ENCODE measurements at regions of chr11 and their contacts with region 1.

Region 1: DNA sequence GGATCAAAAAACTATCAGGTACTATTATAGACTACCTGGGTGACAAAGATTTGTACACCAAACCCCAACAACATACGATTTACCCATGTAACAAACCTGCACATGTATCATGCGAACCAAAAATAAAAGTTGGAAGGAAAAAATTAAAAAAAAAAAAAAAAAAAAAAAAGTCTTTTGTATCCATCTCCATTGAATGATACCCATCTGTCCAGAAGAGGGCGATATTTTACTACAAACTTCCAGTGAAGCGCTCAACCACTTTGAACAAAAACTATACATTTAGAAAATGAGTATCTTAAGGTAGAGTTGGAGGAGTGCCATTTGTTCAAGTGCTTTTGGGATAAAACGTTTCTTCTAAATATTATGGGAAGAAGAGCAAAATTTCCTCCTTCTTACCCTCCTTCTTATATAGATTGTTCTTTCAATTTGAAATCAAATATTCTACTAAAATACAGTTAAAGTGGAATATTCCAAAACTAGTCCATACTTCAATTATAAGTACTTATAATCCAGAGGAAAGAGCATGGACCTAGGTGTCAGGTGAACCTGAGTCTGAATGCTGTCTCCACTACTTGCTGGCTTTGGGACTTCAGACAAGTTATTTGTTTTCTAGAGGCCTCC is 23.3 kb downstream of the ARL14EP start:
- DNase-seq: no peak
- H3K4me3 ChIP-seq: no peak overlapping the region
- H3K27ac ChIP-seq: no peak overlapping the region
- H3K4me1 ChIP-seq: no peaks in the 10 kb centered on the region
- H3K27me3 ChIP-seq: no peaks in the 10 kb centered on the region
- CTCF ChIP-seq: peak; percentile 43 to 67 (median 64)

Region 2: GRCh38 chr11:28346209-28346608 is 2000.0 kb before region 1 on chr11:
- intact Hi-C with region 1: no loop called
- DNase-seq: no peak
- H3K4me3 ChIP-seq: no peak overlapping the region
- H3K27ac ChIP-seq: no peak overlapping the region
- H3K4me1 ChIP-seq: no peaks in the 10 kb centered on the region
- H3K27me3 ChIP-seq: no peaks in the 10 kb centered on the region
- CTCF ChIP-seq: no peak

Region 3: DNA sequence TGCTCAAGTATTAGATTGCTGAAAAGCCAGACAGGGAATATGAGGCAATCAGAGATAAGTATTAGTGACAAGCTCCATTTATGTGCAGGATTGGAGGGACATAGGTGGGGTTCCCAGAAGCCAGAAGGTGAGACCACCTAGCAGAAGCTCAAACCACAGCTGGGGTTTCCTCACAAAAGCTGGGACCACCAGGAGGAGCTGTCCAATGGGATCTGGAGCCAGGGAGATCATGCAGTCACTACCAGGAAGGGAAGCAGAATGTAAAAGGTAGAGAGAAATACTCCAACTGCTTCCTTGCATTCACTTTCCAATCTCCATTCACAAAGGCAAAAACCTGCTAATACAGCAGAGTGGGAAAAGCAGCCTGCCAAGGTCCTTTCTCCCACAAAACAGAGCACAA is 120.5 kb before region 1 on chr11:
- intact Hi-C with region 1: no loop called
- DNase-seq: no peak
- H3K4me3 ChIP-seq: no peak overlapping the region
- H3K27ac ChIP-seq: no peak overlapping the region
- H3K4me1 ChIP-seq: no peaks in the 10 kb centered on the region
- H3K27me3 ChIP-seq: no peaks in the 10 kb centered on the region
- CTCF ChIP-seq: no peak

Region 4: DNA sequence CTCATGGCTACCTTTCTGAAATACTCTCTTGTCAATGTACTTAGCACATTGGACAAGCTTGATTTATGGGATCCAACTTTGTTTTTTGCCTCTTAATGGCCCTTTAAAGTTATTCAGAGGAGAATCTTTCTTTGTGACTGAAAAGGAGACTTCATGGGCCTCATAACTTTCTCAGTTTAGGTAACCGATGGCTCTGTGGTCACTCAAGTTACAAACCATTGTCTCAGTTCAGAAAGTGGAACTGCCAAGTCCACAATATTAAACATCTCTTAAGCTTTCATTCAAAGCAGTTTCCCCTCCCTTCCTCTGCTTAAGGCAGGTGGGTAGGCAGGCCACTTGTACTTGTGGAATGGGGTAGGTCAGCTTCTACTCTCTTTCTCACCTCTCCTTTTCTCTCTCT is 35.6 kb before region 1 on chr11:
- intact Hi-C with region 1: no loop called
- DNase-seq: no peak
- H3K4me3 ChIP-seq: no peak overlapping the region
- H3K27ac ChIP-seq: no peak overlapping the region
- H3K4me1 ChIP-seq: no peaks in the 10 kb centered on the region
- H3K27me3 ChIP-seq: no peaks in the 10 kb centered on the region
- CTCF ChIP-seq: no peak

Region 5: GRCh38 chr11:30653606-30654005 is 307.4 kb after region 1 on chr11:
- intact Hi-C with region 1: loop called (anchors 2 kb)
- DNase-seq: no peak
- H3K4me3 ChIP-seq: no peak overlapping the region
- H3K27ac ChIP-seq: no peak overlapping the region
- H3K4me1 ChIP-seq: no peaks in the 10 kb centered on the region
- H3K27me3 ChIP-seq: no peaks in the 10 kb centered on the region
- CTCF ChIP-seq: peak in 1 of 3 experiments; percentile 30

Region 6: DNA sequence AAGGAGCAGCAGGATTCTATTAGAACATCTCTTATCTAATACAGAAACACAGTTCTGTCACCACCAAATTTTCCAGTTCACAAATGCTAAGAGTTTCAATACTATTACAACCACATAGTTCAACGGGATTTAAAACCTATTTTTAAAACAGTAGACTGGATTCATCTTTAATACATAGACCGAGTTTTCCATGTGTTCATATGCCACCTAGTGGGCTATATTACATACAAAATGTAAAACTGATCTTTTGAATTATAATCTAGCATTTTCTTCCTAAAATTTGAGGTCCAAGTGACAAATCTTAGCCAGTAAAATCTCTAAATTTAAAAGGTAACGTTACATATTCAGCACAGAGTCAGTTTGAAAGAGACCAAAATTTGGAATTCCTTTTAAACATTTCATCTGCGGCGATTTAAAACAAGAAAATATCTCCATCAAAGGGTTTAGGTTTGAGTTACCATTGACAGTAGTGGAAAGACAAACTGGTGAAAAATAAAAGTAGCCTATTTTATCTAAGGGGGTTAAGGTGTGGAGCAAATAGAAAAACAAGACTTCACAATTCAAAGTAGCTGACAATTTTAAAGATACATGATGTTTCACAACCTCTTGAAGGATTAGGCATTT is 509.3 kb after region 1 on chr11:
- intact Hi-C with region 1: loop called (anchors 1 kb)
- DNase-seq: no peak
- H3K4me3 ChIP-seq: no peak overlapping the region
- H3K27ac ChIP-seq: no peak overlapping the region
- H3K4me1 ChIP-seq: peaks cover 0 to 2% of the 10 kb centered on the region in 2 donors
- H3K27me3 ChIP-seq: no peaks in the 10 kb centered on the region
- CTCF ChIP-seq: peak in 2 of 3 experiments; percentile 45 to 64

Region 7: GRCh38 chr11:30917859-30918478 is 571.8 kb after region 1 on chr11:
- intact Hi-C with region 1: loop called (anchors 5 kb)
- DNase-seq: no peak
- H3K4me3 ChIP-seq: no peak overlapping the region
- H3K27ac ChIP-seq: no peak overlapping the region
- H3K4me1 ChIP-seq: no peaks in the 10 kb centered on the region
- H3K27me3 ChIP-seq: no peaks in the 10 kb centered on the region
- CTCF ChIP-seq: peak; percentile 43 to 80 (median 58)

Measured in ascending aorta (tissue), 2 donors.